ENCODE measurements at regions of chr6 and their contacts with region 1.

Region 1: GRCh38 chr6:978937-979685 is 286.2 kb upstream of the EXOC2 start:
- DNase-seq: no peak
- H3K4me3 ChIP-seq: no peak overlapping the region
- H3K27ac ChIP-seq: no peak overlapping the region
- H3K4me1 ChIP-seq: no peaks in the 10 kb centered on the region
- H3K27me3 ChIP-seq: no peaks in the 10 kb centered on the region
- CTCF ChIP-seq: no peak
- POLR2A ChIP-seq: no peak

Region 2: GRCh38 chr6:939526-940252 is 39.4 kb before region 1 on chr6:
- intact Hi-C with region 1: loop called (anchors 2 kb)
- DNase-seq: no peak
- H3K4me3 ChIP-seq: no peak overlapping the region
- H3K27ac ChIP-seq: no peak overlapping the region
- H3K4me1 ChIP-seq: no peaks in the 10 kb centered on the region
- H3K27me3 ChIP-seq: no peaks in the 10 kb centered on the region
- CTCF ChIP-seq: no peak
- POLR2A ChIP-seq: no peak

Region 3: DNA sequence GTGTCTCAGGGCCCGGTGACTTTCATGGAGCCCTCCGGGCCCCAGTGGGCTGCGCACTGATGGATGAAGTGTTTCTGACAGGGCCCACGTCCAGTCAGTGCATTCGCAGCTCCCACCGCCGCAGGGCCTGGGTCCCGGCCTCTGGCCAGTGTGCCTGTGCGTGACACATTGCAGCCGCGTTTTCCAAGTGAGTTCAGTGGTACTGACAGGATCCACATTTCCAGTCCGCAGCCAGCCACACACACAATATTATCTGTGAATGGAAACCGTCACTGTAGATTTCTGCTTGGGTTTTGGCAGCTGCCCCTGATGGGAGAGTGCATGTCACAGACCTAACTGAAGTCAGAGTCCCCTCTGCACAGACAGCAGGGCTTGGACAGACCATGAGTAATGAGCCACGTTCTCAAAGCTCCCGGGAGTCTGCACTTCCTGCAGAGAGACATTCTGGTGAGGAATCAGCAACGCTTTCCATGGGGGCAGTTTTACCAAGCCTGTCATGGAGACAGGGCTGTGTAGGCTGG is 1600.2 kb after region 1 on chr6:
- intact Hi-C with region 1: no loop called
- DNase-seq: no peak
- H3K4me3 ChIP-seq: no peak overlapping the region
- H3K27ac ChIP-seq: peak overlapping the region; percentile 7 to 43
- H3K4me1 ChIP-seq: no peaks in the 10 kb centered on the region
- H3K27me3 ChIP-seq: no peaks in the 10 kb centered on the region
- CTCF ChIP-seq: no peak
- POLR2A ChIP-seq: no peak

Measured in breast epithelium (tissue), 4 donors.